ENCODE measurements at regions of chr17 and their contacts with region 1.

Region 1: GRCh38 chr17:28335201-28335955 is at the starts of genes IFT20 and TNFAIP1:
- DNase-seq: peak; percentile 90
- ATAC-seq: peak; percentile 96
- H3K4me3 Mint-ChIP-seq: peak within 1 kb of the TSS; percentile 96
- H3K27ac Mint-ChIP-seq: peak within 1 kb of the TSS; percentile 89
- H3K4me1 Mint-ChIP-seq: peaks cover 37% of the 10 kb centered on the region
- H3K27me3 Mint-ChIP-seq: no peaks in the 10 kb centered on the region
- CTCF ChIP-seq: no peak
- total RNA-seq, gene IFT20: 24.9 and 25.9 TPM in 2 replicates
- total RNA-seq, gene TNFAIP1: 16.3 and 18.9 TPM in 2 replicates

Region 2: GRCh38 chr17:27805520-27806146 is 529.7 kb before region 1 on chr17:
- CTCF ChIA-PET with region 1: interaction called, 8 read pairs
- POLR2A ChIA-PET with region 1: interaction called, 3 read pairs
- intact Hi-C with region 1: loop called (anchors 1 kb)
- DNase-seq: peak; percentile 61
- ATAC-seq: peak; percentile 64
- H3K4me3 Mint-ChIP-seq: peak overlapping the region; percentile 83
- H3K27ac Mint-ChIP-seq: peak overlapping the region; percentile 96
- H3K4me1 Mint-ChIP-seq: peaks cover 50% of the 10 kb centered on the region
- H3K27me3 Mint-ChIP-seq: no peaks in the 10 kb centered on the region
- CTCF ChIP-seq: no peak

Region 3: GRCh38 chr17:28041068-28041843 is 294.1 kb before region 1 on chr17:
- CTCF ChIA-PET with region 1: no interaction called
- POLR2A ChIA-PET with region 1: interaction called, 14 read pairs
- intact Hi-C with region 1: loop called (anchors 1 kb)
- DNase-seq: peak; percentile 97
- ATAC-seq: peak; percentile 92
- H3K4me3 Mint-ChIP-seq: peak overlapping the region; percentile 86
- H3K27ac Mint-ChIP-seq: peak overlapping the region; percentile 91
- H3K4me1 Mint-ChIP-seq: peaks cover 53% of the 10 kb centered on the region
- H3K27me3 Mint-ChIP-seq: peaks cover 2% of the 10 kb centered on the region
- CTCF ChIP-seq: no peak

Region 4: DNA sequence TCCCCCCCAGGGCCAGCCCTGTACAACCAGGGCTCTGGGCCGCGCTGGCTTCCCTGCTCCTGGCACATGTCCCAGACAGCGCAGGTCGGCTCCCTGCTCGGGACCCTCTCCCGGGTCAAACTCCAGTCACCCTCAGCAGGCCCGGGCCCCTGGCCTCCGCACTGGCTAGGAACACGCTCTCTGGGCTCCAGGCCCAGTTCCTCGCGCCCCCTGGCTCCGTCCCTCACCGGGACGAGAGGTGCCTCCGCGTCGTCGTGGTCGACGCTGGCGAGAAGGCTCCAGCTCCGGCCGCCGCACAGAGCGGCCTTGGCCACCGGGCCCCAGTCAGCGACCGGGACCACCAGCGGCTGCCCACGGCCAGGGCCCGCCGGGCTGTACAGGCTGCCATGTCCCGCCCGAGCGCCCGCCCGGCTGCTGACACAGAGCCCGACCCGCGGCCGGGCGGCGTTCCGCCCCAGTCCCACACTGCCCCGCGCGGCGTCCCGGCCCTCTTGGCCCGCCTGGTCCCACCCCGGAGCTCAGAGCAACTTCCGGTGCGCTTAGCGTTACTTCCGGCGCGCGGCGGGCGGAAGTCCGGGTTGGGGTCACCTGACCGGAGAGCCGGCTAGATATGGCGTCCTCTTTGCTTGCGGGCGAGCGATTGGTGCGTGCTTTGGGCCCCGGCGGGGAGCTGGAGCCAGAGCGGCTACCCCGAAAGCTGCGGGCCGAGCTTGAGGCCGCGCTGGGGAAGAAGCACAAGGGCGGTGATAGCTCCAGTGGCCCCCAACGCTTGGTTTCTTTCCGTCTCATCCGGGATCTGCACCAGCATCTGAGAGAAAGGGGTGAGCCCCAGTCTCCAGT is 21.9 kb after region 1 on chr17 and contains the start of gene POLDIP2:
- CTCF ChIA-PET with region 1: no interaction called
- POLR2A ChIA-PET with region 1: interaction called, 110 read pairs
- intact Hi-C with region 1: loop called (anchors 1 kb)
- DNase-seq: peak; percentile 96
- ATAC-seq: peak; percentile 98
- H3K4me3 Mint-ChIP-seq: peak within 1 kb of the TSS; percentile 97
- H3K27ac Mint-ChIP-seq: peak within 1 kb of the TSS; percentile 93
- H3K4me1 Mint-ChIP-seq: peaks cover 26% of the 10 kb centered on the region
- H3K27me3 Mint-ChIP-seq: no peaks in the 10 kb centered on the region
- CTCF ChIP-seq: no peak
- total RNA-seq, gene POLDIP2: 60.5 and 65.2 TPM in 2 replicates

Region 5: GRCh38 chr17:28405632-28406472 is 70.5 kb after region 1 on chr17 and contains the start of gene SLC46A1:
- CTCF ChIA-PET with region 1: no interaction called
- POLR2A ChIA-PET with region 1: no interaction called
- intact Hi-C with region 1: loop called (anchors 1 kb)
- DNase-seq: peak; percentile 52
- ATAC-seq: peak; percentile 88
- H3K4me3 Mint-ChIP-seq: peak within 1 kb of the TSS; percentile 83
- H3K27ac Mint-ChIP-seq: peak within 1 kb of the TSS; percentile 41
- H3K4me1 Mint-ChIP-seq: peaks cover 8% of the 10 kb centered on the region
- H3K27me3 Mint-ChIP-seq: peaks cover 4% of the 10 kb centered on the region
- CTCF ChIP-seq: no peak
- total RNA-seq, gene SLC46A1: 1.5 and 2.1 TPM in 2 replicates

Measured in activated B cell treated with CpG ODN at 0.5 μM for 24 hours (primary cell).